ENCODE measurements at regions of chr10 and their contacts with region 1.

Region 1: GRCh38 chr10:67764012-67764822 is 68.2 kb upstream of the CTNNA3 start:
- DNase-seq: peak; percentile 96 to 99 (median 98)
- ATAC-seq: peak; percentile 88
- H3K4me3 ChIP-seq: peak overlapping the region; percentile 99
- H3K4me3 Mint-ChIP-seq: peak overlapping the region; percentile 81 to 99 (median 94)
- H3K27ac ChIP-seq: peak overlapping the region; percentile 81
- H3K27ac Mint-ChIP-seq: peak overlapping the region; percentile 95 to 100 (median 100)
- H3K4me1 ChIP-seq: peaks cover 4 to 6% of the 10 kb centered on the region in 2 donors
- H3K4me1 Mint-ChIP-seq: peaks cover 0 to 37% (median 14%) of the 10 kb centered on the region in 7 donors
- H3K27me3 ChIP-seq: no peaks in the 10 kb centered on the region
- H3K27me3 Mint-ChIP-seq: peaks cover 0 to 16% (median 0%) of the 10 kb centered on the region in 5 donors

Region 2: DNA sequence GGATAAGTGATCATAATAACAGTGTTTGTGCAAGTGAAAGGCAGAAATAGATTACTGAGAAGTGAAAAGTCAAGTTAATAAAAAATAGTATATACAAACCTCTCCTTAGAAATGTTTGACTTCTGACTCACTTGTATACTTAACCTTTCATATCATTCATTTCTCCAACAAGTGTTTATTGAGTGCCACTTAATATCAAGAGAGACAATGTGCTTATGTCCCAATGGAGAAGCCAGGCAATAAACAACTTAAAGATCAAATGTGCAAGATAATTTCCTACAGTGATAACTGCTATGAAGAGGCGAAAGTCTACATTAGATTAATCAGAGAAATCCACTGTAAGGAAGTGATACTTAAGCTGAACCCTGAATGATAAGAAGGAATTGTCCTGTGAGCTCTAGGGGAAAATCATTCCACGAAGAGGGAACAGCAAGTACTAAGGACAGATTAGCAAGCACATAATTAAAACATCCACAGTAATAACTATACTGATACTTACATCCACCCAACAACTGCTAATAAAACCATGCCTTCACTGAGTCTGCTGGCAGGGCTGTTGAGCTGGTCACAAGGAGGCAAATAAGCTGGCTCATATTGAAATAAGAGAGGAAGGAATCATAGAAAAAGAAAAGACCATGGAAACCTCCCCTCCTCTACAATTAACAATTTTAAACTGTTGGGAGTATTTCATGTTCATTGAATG is 271.7 kb before region 1 on chr10:
- CTCF ChIA-PET with region 1: no interaction called
- POLR2A ChIA-PET with region 1: no interaction called
- intact Hi-C with region 1: no loop called
- DNase-seq: no peak
- ATAC-seq: no peak
- H3K4me3 ChIP-seq: no peak overlapping the region
- H3K4me3 Mint-ChIP-seq: no peak overlapping the region
- H3K27ac ChIP-seq: no peak overlapping the region
- H3K27ac Mint-ChIP-seq: no peak overlapping the region
- H3K4me1 ChIP-seq: no peaks in the 10 kb centered on the region
- H3K4me1 Mint-ChIP-seq: no peaks in the 10 kb centered on the region
- H3K27me3 ChIP-seq: no peaks in the 10 kb centered on the region
- H3K27me3 Mint-ChIP-seq: no peaks in the 10 kb centered on the region

Region 3: DNA sequence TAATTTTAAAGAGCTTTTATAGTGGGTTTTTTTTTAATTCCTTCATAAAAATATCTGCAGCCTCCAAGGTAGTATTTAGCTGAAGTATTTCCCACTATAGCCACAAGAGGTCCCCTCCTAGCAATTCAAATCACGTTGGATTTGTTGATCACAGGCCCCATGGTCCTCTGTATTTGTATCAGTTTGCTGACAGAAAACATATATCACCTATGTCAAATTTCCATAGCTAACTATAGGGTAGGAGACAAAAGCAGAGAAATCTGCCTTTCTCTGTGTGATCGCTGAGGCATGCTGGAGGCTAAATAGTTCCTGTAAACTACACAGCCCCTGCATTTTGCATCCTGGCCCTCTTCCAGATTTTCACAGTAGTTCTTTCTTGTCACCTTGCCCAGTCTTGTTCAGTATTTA is 66.5 kb before region 1 on chr10:
- CTCF ChIA-PET with region 1: interaction called, 7 read pairs
- POLR2A ChIA-PET with region 1: interaction called, 6 read pairs
- intact Hi-C with region 1: loop called (anchors 1 to 5 kb)
- DNase-seq: peak in 7 of 9 donors; percentile 34 to 68 (median 56)
- ATAC-seq: peak; percentile 88
- H3K4me3 ChIP-seq: no peak overlapping the region
- H3K4me3 Mint-ChIP-seq: no peak overlapping the region
- H3K27ac ChIP-seq: no peak overlapping the region
- H3K27ac Mint-ChIP-seq: peak overlapping the region in 1 of 9 donors; percentile 56
- H3K4me1 ChIP-seq: no peaks in the 10 kb centered on the region
- H3K4me1 Mint-ChIP-seq: peaks cover 0 to 15% (median 5%) of the 10 kb centered on the region in 7 donors
- H3K27me3 ChIP-seq: no peaks in the 10 kb centered on the region
- H3K27me3 Mint-ChIP-seq: peaks cover 4 to 41% (median 29%) of the 10 kb centered on the region in 5 donors

Region 4: DNA sequence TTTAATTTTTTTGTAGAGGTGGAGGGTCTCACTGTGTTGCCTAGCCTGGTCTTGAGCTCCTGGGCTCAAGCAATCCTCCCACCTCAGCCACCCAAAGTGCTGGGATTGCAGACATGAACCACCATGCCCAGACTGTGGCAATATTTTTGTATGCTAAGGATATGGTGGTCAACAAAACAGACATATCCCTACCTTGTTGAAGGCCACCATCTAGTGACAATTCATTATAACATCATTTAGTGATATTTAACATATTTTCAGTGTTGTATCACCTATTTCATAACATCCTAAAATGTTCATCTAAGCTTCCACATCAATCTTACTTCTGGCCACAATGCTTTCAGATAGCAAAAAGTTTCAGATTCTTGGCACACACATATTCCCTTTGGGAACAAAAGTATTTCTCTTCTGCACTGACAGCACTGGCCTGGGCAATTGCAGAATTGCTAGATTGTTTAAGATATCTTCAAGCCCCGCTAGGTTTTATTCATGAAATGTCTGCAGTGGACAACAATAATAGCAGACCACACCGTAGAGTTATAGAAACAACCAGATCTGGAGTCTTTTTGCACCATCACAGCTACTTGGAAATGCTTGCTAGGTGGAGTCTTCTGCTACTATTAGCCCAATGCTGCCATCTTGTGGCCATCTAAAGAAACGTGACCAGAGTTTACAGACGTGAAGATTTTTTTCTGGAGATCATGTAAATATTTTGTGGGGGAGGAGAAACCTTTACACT is 15.4 kb after region 1 on chr10:
- CTCF ChIA-PET with region 1: interaction called, 11 read pairs
- POLR2A ChIA-PET with region 1: interaction called, 12 read pairs
- intact Hi-C with region 1: loop called (anchors 1 kb)
- DNase-seq: peak; percentile 27 to 84 (median 77)
- ATAC-seq: peak; percentile 91
- H3K4me3 ChIP-seq: no peak overlapping the region
- H3K4me3 Mint-ChIP-seq: no peak overlapping the region
- H3K27ac ChIP-seq: no peak overlapping the region
- H3K27ac Mint-ChIP-seq: peak overlapping the region in 2 of 9 donors; percentile 1 to 8
- H3K4me1 ChIP-seq: no peaks in the 10 kb centered on the region
- H3K4me1 Mint-ChIP-seq: peaks cover 10 to 39% (median 14%) of the 10 kb centered on the region in 7 donors
- H3K27me3 ChIP-seq: no peaks in the 10 kb centered on the region
- H3K27me3 Mint-ChIP-seq: no peaks in the 10 kb centered on the region

Region 5: GRCh38 chr10:68074775-68075549 is 310.7 kb after region 1 on chr10 and contains the start of gene HERC4:
- CTCF ChIA-PET with region 1: no interaction called
- POLR2A ChIA-PET with region 1: interaction called, 3 read pairs
- intact Hi-C with region 1: loop called in 1 of 2 experiments (anchors 1 kb)
- DNase-seq: peak; percentile 80 to 91 (median 89)
- ATAC-seq: peak; percentile 97
- H3K4me3 ChIP-seq: peak within 1 kb of the TSS; percentile 91
- H3K4me3 Mint-ChIP-seq: peak within 1 kb of the TSS; percentile 91 to 98 (median 96)
- H3K27ac ChIP-seq: peak within 1 kb of the TSS; percentile 96
- H3K27ac Mint-ChIP-seq: peak within 1 kb of the TSS; percentile 89 to 95 (median 94)
- H3K4me1 ChIP-seq: peaks cover 15 to 21% of the 10 kb centered on the region in 2 donors
- H3K4me1 Mint-ChIP-seq: peaks cover 26 to 51% (median 41%) of the 10 kb centered on the region in 7 donors
- H3K27me3 ChIP-seq: peaks cover 0 to 3% of the 10 kb centered on the region in 2 donors
- H3K27me3 Mint-ChIP-seq: peaks cover 0 to 2% (median 0%) of the 10 kb centered on the region in 5 donors
- total RNA-seq, gene HERC4: 65.7 to 113 (median 78.6) TPM

Region 6: GRCh38 chr10:68526626-68527307 is 762.5 kb after region 1 on chr10:
- CTCF ChIA-PET with region 1: no interaction called
- POLR2A ChIA-PET with region 1: no interaction called
- intact Hi-C with region 1: loop called in 1 of 2 experiments (anchors 1 kb)
- DNase-seq: peak in 1 of 9 donors; percentile 4
- ATAC-seq: no peak
- H3K4me3 ChIP-seq: peak overlapping the region; percentile 91
- H3K4me3 Mint-ChIP-seq: peak overlapping the region; percentile 87 to 94 (median 92)
- H3K27ac ChIP-seq: peak overlapping the region; percentile 96
- H3K27ac Mint-ChIP-seq: peak overlapping the region; percentile 78 to 97 (median 95)
- H3K4me1 ChIP-seq: peaks cover 0 to 5% of the 10 kb centered on the region in 2 donors
- H3K4me1 Mint-ChIP-seq: peaks cover 0 to 20% (median 7%) of the 10 kb centered on the region in 7 donors
- H3K27me3 ChIP-seq: no peaks in the 10 kb centered on the region
- H3K27me3 Mint-ChIP-seq: no peaks in the 10 kb centered on the region